Activated T-helper 1 cell treated with anti-CD3 and anti-CD28 coated beads, Interleukin-12 subunit alpha, Interleukin-12 subunit beta, Interleukin-2, Interleukin-4 antibody, amounts not matched to agents 30 ng/mL and 10 ng/mL and 1 ng/mL, durations not matched to agents 14 hours and 24 hours and 36 hours (primary cell): ENCODE measurements at regions of chr6 and their contacts with region 1.

Region 1: DNA sequence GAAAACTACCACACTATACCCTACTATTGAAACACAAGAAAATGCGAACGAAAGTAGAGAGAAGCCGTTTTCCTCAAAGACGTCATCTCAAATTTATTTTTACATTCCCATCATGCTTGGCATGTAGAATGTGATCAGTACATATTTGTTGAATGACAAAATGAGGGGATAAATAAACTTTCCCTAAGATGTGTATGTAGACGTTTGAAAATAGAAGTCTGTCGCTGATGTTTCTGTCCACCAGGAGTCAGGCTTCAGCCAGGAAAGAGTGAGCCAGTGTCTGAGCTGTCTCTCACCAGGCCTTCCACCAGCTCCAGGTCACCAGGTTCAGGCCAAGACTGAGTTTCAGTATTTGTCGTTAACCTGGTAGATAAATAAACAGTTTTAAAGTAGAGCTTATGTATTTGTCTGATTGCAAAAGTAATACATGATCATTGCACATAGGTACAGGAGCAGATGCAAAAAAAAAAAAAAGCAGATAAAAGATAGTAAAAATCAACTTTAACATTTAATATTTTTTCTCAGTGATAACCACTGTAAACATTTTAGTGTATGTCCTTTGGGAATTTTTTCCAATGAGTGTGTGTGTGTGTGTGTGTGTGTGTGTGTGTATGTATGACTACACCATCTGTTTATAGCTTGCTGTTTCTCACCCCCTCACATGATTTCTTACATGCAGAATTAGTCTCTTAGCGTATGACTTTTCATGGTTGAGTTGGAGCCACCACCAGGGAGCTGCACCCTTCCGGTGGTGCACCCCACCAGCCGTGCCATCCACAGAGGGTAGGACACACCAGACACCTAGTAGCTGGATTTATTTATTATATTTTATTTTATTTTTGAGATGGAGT is 26.2 kb downstream of the WRNIP1 start:
- DNase-seq: peak; percentile 46
- H3K4me3 Mint-ChIP-seq: peak overlapping the region; percentile 21
- H3K27ac Mint-ChIP-seq: peak overlapping the region; percentile 88
- H3K4me1 Mint-ChIP-seq: peaks cover 40% of the 10 kb centered on the region
- H3K27me3 Mint-ChIP-seq: no peaks in the 10 kb centered on the region

Region 2: GRCh38 chr6:2209226-2209809 is 582.0 kb before region 1 on chr6:
- intact Hi-C with region 1: no loop called
- DNase-seq: peak; percentile 11
- H3K4me3 Mint-ChIP-seq: no peak overlapping the region
- H3K27ac Mint-ChIP-seq: no peak overlapping the region
- H3K4me1 Mint-ChIP-seq: no peaks in the 10 kb centered on the region
- H3K27me3 Mint-ChIP-seq: peaks cover 2% of the 10 kb centered on the region

Region 3: DNA sequence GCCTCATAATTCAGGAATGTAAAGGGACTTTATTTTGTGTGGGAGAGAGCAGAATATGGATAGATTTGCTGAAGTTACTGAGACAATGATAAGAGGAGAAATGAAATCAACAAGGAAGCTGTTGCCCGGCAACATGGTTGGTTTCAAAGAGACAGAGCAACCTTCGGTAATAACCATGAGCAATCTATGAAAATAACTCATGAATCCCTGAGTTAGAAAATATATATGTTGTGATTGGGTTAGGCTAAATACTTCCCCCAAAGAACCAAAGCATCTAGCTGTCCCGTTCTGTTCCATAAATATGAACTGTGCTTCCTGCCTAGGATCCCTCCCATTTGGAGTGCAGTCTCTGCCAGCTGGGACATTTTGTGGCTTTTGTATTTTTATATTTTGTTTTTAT is 27.2 kb after region 1 on chr6:
- intact Hi-C with region 1: no loop called
- DNase-seq: no peak
- H3K4me3 Mint-ChIP-seq: no peak overlapping the region
- H3K27ac Mint-ChIP-seq: no peak overlapping the region
- H3K4me1 Mint-ChIP-seq: peaks cover 48% of the 10 kb centered on the region
- H3K27me3 Mint-ChIP-seq: no peaks in the 10 kb centered on the region

Region 4: DNA sequence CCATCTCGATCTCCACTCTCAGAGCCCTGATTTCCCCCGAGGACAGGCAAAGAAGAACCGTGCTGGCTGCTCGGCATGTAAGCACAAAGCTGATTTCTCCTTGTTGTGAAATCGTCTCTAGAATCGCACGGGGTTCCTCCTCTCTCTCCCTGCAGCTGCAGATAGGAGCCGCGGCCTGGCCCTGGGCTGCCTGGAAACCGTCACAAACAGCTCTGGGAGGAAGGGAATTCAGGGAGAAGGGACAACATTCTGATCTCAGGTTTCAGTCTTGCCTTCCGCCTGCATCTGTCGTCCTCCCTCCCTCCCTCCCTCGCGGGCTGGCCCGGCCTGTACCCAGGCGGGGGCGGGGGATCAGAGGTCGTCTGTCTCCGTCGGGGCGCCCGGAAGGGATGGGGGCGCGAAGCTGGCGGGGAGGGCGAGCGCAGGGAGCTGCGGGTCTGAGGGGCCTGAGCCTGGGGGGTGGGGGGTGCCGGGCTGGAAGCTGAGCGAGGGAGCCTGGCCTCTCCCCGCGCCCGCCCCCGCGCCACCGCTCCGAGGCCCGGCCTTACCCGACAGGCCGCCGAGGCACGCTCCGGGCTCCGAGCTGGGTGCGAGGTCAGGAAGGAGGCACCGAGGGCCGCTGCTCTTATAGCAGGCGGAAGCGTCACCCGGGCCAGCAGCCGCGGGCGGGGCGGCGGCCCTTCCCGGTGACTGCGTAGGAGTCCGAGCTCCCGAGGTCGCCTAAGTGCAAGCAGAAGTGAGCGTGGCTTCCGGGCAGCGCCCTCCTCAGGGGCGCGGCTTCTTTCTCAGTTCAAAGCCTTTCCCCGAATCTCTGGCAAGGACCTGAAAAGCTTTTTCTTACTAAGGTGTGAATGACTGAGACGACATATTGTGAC is 50.2 kb after region 1 on chr6 and contains the start of gene SERPINB1:
- intact Hi-C with region 1: loop called (anchors 1 kb)
- DNase-seq: peak; percentile 80
- H3K4me3 Mint-ChIP-seq: peak within 1 kb of the TSS; percentile 96
- H3K27ac Mint-ChIP-seq: peak within 1 kb of the TSS; percentile 93
- H3K4me1 Mint-ChIP-seq: peaks cover 62% of the 10 kb centered on the region
- H3K27me3 Mint-ChIP-seq: no peaks in the 10 kb centered on the region
- total RNA-seq, gene SERPINB1: 79.5 and 80.1 TPM in 2 replicates

Region 5: GRCh38 chr6:2846873-2847224 is 55.5 kb after region 1 on chr6:
- intact Hi-C with region 1: loop called (anchors 1 kb)
- DNase-seq: no peak
- H3K4me3 Mint-ChIP-seq: peak overlapping the region; percentile 31
- H3K27ac Mint-ChIP-seq: peak overlapping the region; percentile 41
- H3K4me1 Mint-ChIP-seq: peaks cover 60% of the 10 kb centered on the region
- H3K27me3 Mint-ChIP-seq: no peaks in the 10 kb centered on the region

Region 6: GRCh38 chr6:2900821-2901644 is 109.7 kb after region 1 on chr6:
- intact Hi-C with region 1: loop called (anchors 1 kb)
- DNase-seq: no peak
- H3K4me3 Mint-ChIP-seq: peak overlapping the region; percentile 94
- H3K27ac Mint-ChIP-seq: peak overlapping the region; percentile 93
- H3K4me1 Mint-ChIP-seq: peaks cover 60% of the 10 kb centered on the region
- H3K27me3 Mint-ChIP-seq: peaks cover 2% of the 10 kb centered on the region

Region 7: GRCh38 chr6:2911171-2911570 is 119.8 kb after region 1 on chr6:
- intact Hi-C with region 1: loop called (anchors 1 kb)
- DNase-seq: no peak
- H3K4me3 Mint-ChIP-seq: no peak overlapping the region
- H3K27ac Mint-ChIP-seq: no peak overlapping the region
- H3K4me1 Mint-ChIP-seq: peaks cover 42% of the 10 kb centered on the region
- H3K27me3 Mint-ChIP-seq: peaks cover 1% of the 10 kb centered on the region

Region 8: GRCh38 chr6:2931970-2932748 is 140.8 kb after region 1 on chr6:
- intact Hi-C with region 1: loop called (anchors 1 kb)
- DNase-seq: peak; percentile 81
- H3K4me3 Mint-ChIP-seq: no peak overlapping the region
- H3K27ac Mint-ChIP-seq: peak overlapping the region; percentile 64
- H3K4me1 Mint-ChIP-seq: peaks cover 25% of the 10 kb centered on the region
- H3K27me3 Mint-ChIP-seq: peaks cover 6% of the 10 kb centered on the region

Region 9: GRCh38 chr6:3052481-3053230 is 261.3 kb after region 1 on chr6:
- intact Hi-C with region 1: loop called (anchors 1 kb)
- DNase-seq: no peak
- H3K4me3 Mint-ChIP-seq: peak overlapping the region; percentile 60
- H3K27ac Mint-ChIP-seq: peak overlapping the region; percentile 56
- H3K4me1 Mint-ChIP-seq: peaks cover 30% of the 10 kb centered on the region
- H3K27me3 Mint-ChIP-seq: peaks cover 25% of the 10 kb centered on the region